K562 (cell line): ENCODE measurements at regions of chr2 and their contacts with region 1.

Region 1: DNA sequence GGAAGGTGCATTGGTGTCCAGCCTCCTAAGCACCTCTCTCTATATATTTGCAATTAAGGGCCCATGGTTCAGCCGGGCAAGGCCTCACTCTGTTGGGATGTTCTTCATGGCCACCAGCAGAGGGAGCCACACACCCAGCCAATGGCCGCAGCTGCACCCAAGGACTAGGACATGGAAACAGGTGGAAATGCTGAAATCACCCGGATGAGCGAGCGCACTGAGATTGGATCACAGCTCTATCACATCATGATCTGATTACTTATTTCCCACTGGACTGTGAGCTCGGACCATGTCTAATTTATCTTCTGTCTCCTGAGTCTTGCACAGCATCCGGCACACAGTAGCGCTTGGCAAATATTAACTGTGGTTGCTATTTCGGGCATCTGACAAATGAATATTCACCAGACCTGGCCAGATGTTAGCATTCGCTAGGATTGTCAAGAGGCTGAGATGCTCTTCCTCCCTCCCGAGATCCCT is 31.2 kb downstream of the KIF3C start:
- DNase-seq: peak; percentile 76 to 86 (median 82)
- ATAC-seq: peak; percentile 98
- H3K4me3 ChIP-seq: no peak overlapping the region
- H3K27ac ChIP-seq: no peak overlapping the region
- H3K4me1 ChIP-seq: peaks cover 0 to 8% of the 10 kb centered on the region in 2 experiments; a peak in 1 of 5 replicates
- H3K27me3 ChIP-seq: no peaks in the 10 kb centered on the region
- CTCF ChIP-seq: peak; percentile 89 to 95 (median 94)
- EP300 ChIP-seq: no peak
- POLR2A ChIP-seq: no peak
- RAD21 ChIP-seq: peak; percentile 96 to 97

Region 2: DNA sequence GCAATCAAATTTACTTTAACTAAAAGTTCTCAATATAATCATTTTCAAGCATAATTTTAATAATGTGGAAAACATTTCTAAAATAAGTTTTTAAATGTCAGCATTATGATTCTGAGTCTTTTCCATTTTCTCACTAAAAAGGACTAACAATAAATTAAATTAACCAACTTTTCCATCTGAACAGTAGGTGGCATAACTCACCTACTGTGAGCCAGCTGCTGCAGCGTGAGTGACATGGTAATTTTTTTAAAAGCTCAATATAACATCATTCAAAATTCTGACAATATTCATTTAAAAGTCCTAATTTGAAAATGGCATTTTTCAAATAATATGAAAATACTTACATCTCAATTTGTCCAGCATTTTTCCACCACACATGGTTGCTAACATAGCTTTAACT is 344.2 kb before region 1 on chr2:
- CTCF ChIA-PET with region 1: no interaction called
- POLR2A ChIA-PET with region 1: no interaction called
- in situ Hi-C with region 1: no loop called
- intact Hi-C with region 1: loop called (anchors 1 kb)
- DNase-seq: peak; percentile 12 to 50 (median 18)
- ATAC-seq: 0 out of 3 replicates have a peak, but pooled peaks have one; percentile 55
- H3K4me3 ChIP-seq: no peak overlapping the region
- H3K27ac ChIP-seq: no peak overlapping the region
- H3K4me1 ChIP-seq: no peaks in the 10 kb centered on the region
- H3K27me3 ChIP-seq: peaks cover 0 to 6% of the 10 kb centered on the region in 2 experiments; a peak in 1 of 5 replicates
- CTCF ChIP-seq: peak; percentile 54 to 80 (median 61)
- EP300 ChIP-seq: no peak
- POLR2A ChIP-seq: no peak
- RAD21 ChIP-seq: peak; percentile 55 to 80

Region 3: DNA sequence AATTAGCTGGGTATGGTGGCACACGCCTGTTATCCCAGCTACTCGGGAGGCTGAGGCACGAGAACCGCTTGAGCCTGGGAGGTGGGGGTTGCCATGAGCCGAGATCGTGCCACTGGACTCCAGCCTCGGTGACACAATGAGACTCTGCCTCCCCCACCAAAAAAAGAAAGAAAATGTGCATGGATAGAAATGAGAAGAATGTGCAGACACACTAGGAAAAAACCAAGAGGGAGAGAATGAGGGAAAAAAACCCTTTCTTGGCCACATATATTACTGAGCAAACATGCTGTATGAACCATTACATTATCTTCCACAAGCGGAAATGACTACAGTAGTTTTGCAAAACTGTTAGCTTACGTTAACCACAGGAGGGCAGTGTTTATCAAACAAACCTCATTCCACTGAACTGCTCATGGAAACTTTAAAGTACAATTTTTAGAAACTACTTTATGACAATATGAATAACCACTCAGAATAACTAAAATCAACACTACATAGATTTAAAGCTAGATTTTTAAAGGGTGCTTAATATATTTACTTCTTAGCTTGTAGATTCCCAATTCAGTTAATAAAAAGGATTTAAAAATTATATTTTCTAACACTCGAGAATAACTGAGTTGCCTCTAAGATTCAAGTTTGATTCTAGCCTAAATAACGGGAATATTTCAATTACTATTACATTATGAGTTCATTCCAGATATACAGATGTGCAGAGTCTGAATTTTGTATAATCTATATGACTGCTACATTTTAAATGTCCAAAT is 99.2 kb before region 1 on chr2:
- CTCF ChIA-PET with region 1: interaction called, 10 read pairs
- POLR2A ChIA-PET with region 1: no interaction called
- in situ Hi-C with region 1: no loop called
- intact Hi-C with region 1: loop called (anchors 1 kb)
- DNase-seq: peak; percentile 51 to 83 (median 62)
- ATAC-seq: peak; percentile 92
- H3K4me3 ChIP-seq: peak overlapping the region; percentile 21; the same call in 1 of the 2 replicates
- H3K27ac ChIP-seq: peak overlapping the region; percentile 98
- H3K4me1 ChIP-seq: peaks cover 17 to 22% of the 10 kb centered on the region in 2 experiments
- H3K27me3 ChIP-seq: no peaks in the 10 kb centered on the region
- CTCF ChIP-seq: peak; percentile 53 to 81 (median 65); a peak in 5 of 6 replicates
- EP300 ChIP-seq: peak; percentile 67; the same call in 1 of the 2 replicates
- POLR2A ChIP-seq: peak; percentile 71
- RAD21 ChIP-seq: peak; percentile 85 to 89

Region 4: DNA sequence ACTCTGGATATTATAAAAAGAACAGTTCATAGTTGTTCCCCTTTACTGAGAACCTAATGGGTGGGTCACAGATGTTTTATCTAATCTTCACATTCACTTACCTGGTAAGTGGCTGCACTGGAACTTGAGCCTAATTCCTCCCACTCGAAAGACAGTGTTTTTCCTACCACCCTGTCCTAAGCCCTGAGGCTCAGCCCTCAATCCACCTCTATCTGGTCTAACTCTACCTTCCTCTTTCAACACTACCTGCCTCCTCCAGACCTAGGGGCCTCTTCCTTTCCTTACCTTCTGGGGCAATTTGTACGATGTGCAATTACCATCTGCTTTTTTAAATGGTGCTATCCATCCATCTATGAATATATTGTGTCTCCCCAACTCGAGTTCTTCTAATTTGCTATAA is 40.9 kb after region 1 on chr2:
- CTCF ChIA-PET with region 1: interaction called, 7 read pairs
- POLR2A ChIA-PET with region 1: no interaction called
- in situ Hi-C with region 1: no loop called
- intact Hi-C with region 1: loop called (anchors 1 kb)
- DNase-seq: peak in 1 of 4 experiments; percentile 21
- ATAC-seq: peak; percentile 72
- H3K4me3 ChIP-seq: no peak overlapping the region
- H3K27ac ChIP-seq: no peak overlapping the region
- H3K4me1 ChIP-seq: peaks cover 0 to 8% of the 10 kb centered on the region in 2 experiments; a peak in 3 of 5 replicates
- H3K27me3 ChIP-seq: no peaks in the 10 kb centered on the region
- CTCF ChIP-seq: no peak
- EP300 ChIP-seq: no peak
- POLR2A ChIP-seq: no peak
- RAD21 ChIP-seq: no peak

Region 5: DNA sequence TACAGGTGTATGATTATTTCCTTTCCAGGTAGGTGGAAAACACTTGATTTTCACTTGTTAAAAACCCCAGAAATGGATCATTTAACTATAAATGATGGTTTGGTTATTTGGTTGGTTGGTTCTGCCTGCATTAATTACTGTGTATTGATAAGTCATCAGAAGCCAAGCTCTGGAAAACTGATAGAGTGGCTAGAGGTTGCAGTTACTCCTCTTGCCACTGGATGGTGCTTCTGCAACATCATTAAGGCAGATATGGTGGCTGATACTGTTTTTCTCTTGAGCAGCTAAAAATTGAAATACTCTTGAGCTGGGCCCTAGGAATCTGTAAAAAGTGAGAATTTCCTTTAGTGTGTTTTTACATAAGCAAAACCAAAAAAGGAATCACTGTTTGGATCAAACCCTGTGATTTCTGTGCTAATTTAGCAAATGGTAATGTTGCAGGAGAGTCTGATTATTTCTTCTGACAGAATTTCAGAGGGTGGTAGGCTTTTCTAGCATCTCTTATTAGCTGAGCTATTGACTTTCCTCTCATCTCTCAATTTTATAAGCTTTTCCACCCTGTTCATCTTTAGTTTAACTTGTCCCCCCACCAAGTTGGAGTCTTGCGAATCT is 137.0 kb after region 1 on chr2:
- CTCF ChIA-PET with region 1: no interaction called
- POLR2A ChIA-PET with region 1: no interaction called
- in situ Hi-C with region 1: no loop called
- intact Hi-C with region 1: loop called (anchors 2 kb)
- DNase-seq: peak; percentile 44 to 57 (median 50)
- ATAC-seq: peak; percentile 84
- H3K4me3 ChIP-seq: no peak overlapping the region
- H3K27ac ChIP-seq: no peak overlapping the region
- H3K4me1 ChIP-seq: peaks cover 2 to 8% of the 10 kb centered on the region in 2 experiments; a peak in 4 of 5 replicates
- H3K27me3 ChIP-seq: no peaks in the 10 kb centered on the region
- CTCF ChIP-seq: peak; percentile 55 to 74 (median 66)
- EP300 ChIP-seq: no peak
- POLR2A ChIP-seq: no peak
- RAD21 ChIP-seq: peak; percentile 36 to 64

Region 6: GRCh38 chr2:26144953-26145680 is 194.0 kb after region 1 on chr2:
- CTCF ChIA-PET with region 1: interaction called, 50 read pairs
- POLR2A ChIA-PET with region 1: interaction called, 4 read pairs
- in situ Hi-C with region 1: no loop called
- intact Hi-C with region 1: loop called (anchors 1 kb)
- DNase-seq: peak; percentile 54 to 83 (median 64)
- ATAC-seq: peak; percentile 86
- H3K4me3 ChIP-seq: no peak overlapping the region
- H3K27ac ChIP-seq: no peak overlapping the region
- H3K4me1 ChIP-seq: peaks cover 5 to 15% of the 10 kb centered on the region in 2 experiments; a peak in 3 of 5 replicates
- H3K27me3 ChIP-seq: peaks cover 11 to 13% of the 10 kb centered on the region in 2 experiments; a peak in 4 of 5 replicates
- CTCF ChIP-seq: peak; percentile 75 to 90 (median 87)
- EP300 ChIP-seq: no peak
- POLR2A ChIP-seq: no peak
- RAD21 ChIP-seq: peak; percentile 93 to 95

Region 7: GRCh38 chr2:26469092-26469710 is 518.1 kb after region 1 on chr2:
- CTCF ChIA-PET with region 1: interaction called, 4 read pairs
- POLR2A ChIA-PET with region 1: no interaction called
- in situ Hi-C with region 1: loop called (anchors 10 kb)
- intact Hi-C with region 1: loop called (anchors 5 kb)
- DNase-seq: peak; percentile 76 to 87 (median 78)
- ATAC-seq: peak; percentile 70
- H3K4me3 ChIP-seq: no peak overlapping the region
- H3K27ac ChIP-seq: no peak overlapping the region
- H3K4me1 ChIP-seq: peaks cover 6 to 24% of the 10 kb centered on the region in 2 experiments; a peak in 4 of 5 replicates
- H3K27me3 ChIP-seq: peaks cover 0 to 5% of the 10 kb centered on the region in 2 experiments; a peak in 1 of 5 replicates
- CTCF ChIP-seq: peak; percentile 80 to 91 (median 88)
- EP300 ChIP-seq: no peak
- POLR2A ChIP-seq: no peak
- RAD21 ChIP-seq: peak; percentile 89 to 91